Uterus (tissue), 4 donors: ENCODE measurements at regions of chr12 and their contacts with region 1.

Region 1: GRCh38 chr12:49707128-49707811 is at the start of gene FMNL3:
- DNase-seq: peak; percentile 97 to 99
- H3K4me3 ChIP-seq: peak within 1 kb of the TSS; percentile 73 to 99
- H3K27ac ChIP-seq: peak within 1 kb of the TSS; percentile 96 to 99
- H3K4me1 ChIP-seq: peaks cover 0 to 6% of the 10 kb centered on the region in 2 donors
- H3K27me3 ChIP-seq: no peaks in the 10 kb centered on the region
- CTCF ChIP-seq: peak; percentile 95 to 100 (median 98)
- POLR2A ChIP-seq: peak in 1 of 2 donors; percentile 62
- total RNA-seq, gene FMNL3: 3.3 to 45.7 (median 20.4) TPM

Region 2: GRCh38 chr12:49644620-49644994 is 62.7 kb before region 1 on chr12:
- intact Hi-C with region 1: loop called (anchors 2 kb)
- DNase-seq: peak; percentile 84 to 86
- H3K4me3 ChIP-seq: no peak overlapping the region
- H3K27ac ChIP-seq: peak overlapping the region; percentile 38 to 54
- H3K4me1 ChIP-seq: no peaks in the 10 kb centered on the region
- H3K27me3 ChIP-seq: no peaks in the 10 kb centered on the region
- CTCF ChIP-seq: peak; percentile 95 to 97 (median 97)
- POLR2A ChIP-seq: no peak

Region 3: GRCh38 chr12:49866859-49867579 is 159.7 kb after region 1 on chr12:
- intact Hi-C with region 1: no loop called
- DNase-seq: peak; percentile 82 to 83
- H3K4me3 ChIP-seq: no peak overlapping the region
- H3K27ac ChIP-seq: peak overlapping the region in 1 of 2 donors; percentile 88
- H3K4me1 ChIP-seq: peaks cover 15 to 20% of the 10 kb centered on the region in 2 donors
- H3K27me3 ChIP-seq: no peaks in the 10 kb centered on the region
- CTCF ChIP-seq: peak; percentile 93 to 99 (median 96)
- POLR2A ChIP-seq: peak in 1 of 2 donors; percentile 13